ENCODE measurements at regions of chr15 and their contacts with region 1.

Region 1: DNA sequence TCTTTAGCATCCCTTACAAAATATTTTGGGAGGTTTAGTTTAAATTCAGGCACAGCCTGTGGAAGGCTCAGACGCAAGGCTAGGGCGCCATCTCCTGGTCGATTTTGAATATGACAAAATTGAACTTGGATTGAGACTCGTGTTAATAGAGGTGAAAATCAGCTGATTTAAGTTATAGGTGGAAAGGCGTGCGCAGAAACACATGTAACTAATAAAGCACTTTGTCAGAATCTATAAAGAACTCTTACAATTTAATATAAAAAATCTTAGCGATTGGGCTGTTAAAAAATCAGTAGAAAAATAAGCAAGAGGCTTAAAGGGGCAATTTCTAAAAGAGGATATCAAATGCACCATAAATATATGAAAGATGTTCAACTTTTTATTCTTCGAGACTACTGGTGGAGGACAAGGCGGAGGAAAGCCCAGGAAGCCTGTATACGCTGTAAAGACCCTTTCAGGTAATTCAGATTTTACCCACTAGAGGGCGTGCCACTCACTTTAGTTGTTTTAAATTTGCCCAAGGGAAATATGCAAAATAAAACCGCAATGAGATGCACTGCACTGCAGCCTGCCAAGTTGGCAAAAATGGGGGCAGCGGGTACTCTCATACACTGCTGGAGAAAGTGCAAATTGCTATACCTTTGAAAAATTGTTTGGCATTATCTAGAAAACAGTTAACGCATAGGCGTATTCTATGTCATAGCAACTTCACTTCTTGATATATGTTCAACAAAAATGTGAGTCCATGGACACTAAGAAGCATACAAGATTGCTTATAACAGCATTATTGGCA is 64.7 kb downstream of the SLC30A4 start:
- DNase-seq: peak; percentile 66
- H3K4me3 Mint-ChIP-seq: peak overlapping the region; percentile 79
- H3K27ac Mint-ChIP-seq: peak overlapping the region; percentile 78
- H3K4me1 Mint-ChIP-seq: peaks cover 49% of the 10 kb centered on the region
- H3K27me3 Mint-ChIP-seq: no peaks in the 10 kb centered on the region

Region 2: DNA sequence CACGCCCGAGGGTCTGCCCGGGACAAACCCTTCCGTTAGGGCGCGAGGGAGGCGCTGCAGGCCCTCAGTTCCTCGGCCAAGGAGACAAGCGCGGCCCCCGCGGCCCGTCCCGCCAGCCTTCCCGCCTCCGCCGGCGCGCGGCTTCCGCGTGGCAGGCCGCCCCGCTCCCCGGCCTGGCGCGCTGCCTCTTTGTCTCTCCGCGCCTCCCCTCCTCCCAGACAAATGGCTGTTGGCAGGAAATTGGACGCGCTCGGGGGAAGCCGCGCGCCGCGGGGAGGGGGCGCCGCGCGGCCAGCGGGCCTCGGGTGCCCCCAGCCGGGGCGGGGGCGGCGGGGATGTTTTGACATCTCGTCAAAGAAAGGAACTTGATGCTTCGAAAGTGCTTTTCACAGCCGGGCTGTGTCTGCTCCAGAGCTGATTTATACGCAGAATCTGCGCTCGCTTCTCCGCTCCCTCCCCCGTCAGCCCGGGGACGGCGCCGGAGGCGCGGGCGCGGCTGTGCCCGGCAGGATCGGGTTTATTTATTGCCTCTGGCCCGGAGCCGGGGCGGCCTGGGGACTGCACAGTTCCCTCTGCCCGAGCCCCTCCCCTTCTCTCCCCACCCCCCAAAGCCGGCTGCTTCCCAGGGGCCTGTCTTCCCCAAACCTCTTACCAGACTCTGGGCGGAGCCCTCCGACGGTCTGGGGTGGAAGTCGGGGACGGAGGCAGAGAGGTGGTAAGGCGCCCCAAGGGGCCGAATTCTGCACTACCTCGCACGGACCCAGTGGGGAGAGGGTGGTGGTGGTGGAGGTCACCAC is 290.8 kb before region 1 on chr15:
- intact Hi-C with region 1: loop called (anchors 2 kb)
- DNase-seq: peak; percentile 79
- H3K4me3 Mint-ChIP-seq: peak overlapping the region; percentile 64
- H3K27ac Mint-ChIP-seq: peak overlapping the region; percentile 85
- H3K4me1 Mint-ChIP-seq: peaks cover 14% of the 10 kb centered on the region
- H3K27me3 Mint-ChIP-seq: no peaks in the 10 kb centered on the region

Region 3: GRCh38 chr15:45402162-45402954 is 55.5 kb before region 1 on chr15:
- intact Hi-C with region 1: loop called (anchors 2 kb)
- DNase-seq: peak; percentile 93
- H3K4me3 Mint-ChIP-seq: peak overlapping the region; percentile 88
- H3K27ac Mint-ChIP-seq: peak overlapping the region; percentile 77
- H3K4me1 Mint-ChIP-seq: peaks cover 32% of the 10 kb centered on the region
- H3K27me3 Mint-ChIP-seq: peaks cover 4% of the 10 kb centered on the region

Region 4: DNA sequence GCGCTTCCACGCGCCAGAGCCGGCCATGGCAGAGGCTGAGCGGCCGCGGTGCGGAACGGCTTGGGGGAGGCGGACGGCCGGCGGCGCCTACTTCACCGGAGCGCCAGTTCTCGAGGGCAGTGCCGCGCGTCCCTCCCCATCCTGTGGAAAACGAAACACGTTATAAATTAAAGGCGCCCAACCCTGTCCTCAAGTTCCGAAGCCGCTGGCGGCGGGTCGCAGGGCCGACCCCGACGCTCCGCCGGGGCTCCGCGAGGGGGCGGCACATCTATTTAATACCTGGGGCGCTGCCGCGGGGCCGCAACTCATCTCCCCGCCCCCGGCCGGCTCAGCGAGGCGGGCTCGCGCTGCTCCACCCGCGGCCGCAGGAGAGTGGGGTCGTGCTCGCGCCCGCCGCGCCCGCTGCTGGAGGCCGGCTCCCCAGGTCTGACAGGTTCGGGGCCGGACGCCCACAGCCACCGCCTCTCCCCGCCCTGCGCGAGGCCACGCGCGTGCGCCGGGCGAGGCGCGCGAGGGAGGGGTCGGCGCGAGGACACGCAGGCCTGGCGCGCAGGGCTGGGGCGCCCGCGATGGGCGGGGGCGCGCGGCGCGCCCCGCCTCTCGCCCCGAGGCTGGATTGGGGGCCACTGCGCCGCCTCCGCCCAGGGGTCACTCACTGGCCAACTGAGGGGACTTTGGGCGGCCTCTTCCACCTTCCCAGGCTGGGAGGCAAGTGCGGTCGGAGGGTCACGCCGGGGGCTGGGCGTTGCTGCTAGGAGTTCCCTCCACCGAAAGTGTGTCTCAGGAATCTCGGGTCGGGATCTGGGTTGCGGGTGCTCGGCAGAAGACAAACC is 64.7 kb after region 1 on chr15 and contains the start of gene SLC30A4:
- intact Hi-C with region 1: loop called (anchors 2 kb)
- DNase-seq: peak; percentile 53
- H3K4me3 Mint-ChIP-seq: peak within 1 kb of the TSS; percentile 89
- H3K27ac Mint-ChIP-seq: peak within 1 kb of the TSS; percentile 45
- H3K4me1 Mint-ChIP-seq: peaks cover 19% of the 10 kb centered on the region
- H3K27me3 Mint-ChIP-seq: peaks cover 31% of the 10 kb centered on the region
- total RNA-seq, gene SLC30A4: 0.74 and 1.0 TPM in 2 replicates

Region 5: GRCh38 chr15:45611305-45611704 is 153.5 kb after region 1 on chr15:
- intact Hi-C with region 1: loop called (anchors 1 kb)
- DNase-seq: no peak
- H3K4me3 Mint-ChIP-seq: no peak overlapping the region
- H3K27ac Mint-ChIP-seq: no peak overlapping the region
- H3K4me1 Mint-ChIP-seq: peaks cover 7% of the 10 kb centered on the region
- H3K27me3 Mint-ChIP-seq: no peaks in the 10 kb centered on the region

Measured in activated T-helper 2 cell treated with anti-CD3 and anti-CD28 coated beads, Interferon-gamma antibody, Interleukin-2, Interleukin-4, amounts not matched to agents 10 μg/mL and 5 μg/mL and 100 μg/mL, durations not matched to agents 14 hours and 24 hours and 36 hours (primary cell).